ENCODE measurements at regions of chr5 and their contacts with region 1.

Region 1: GRCh38 chr5:95730730-95731570 is at the start of gene RHOBTB3:
- DNase-seq: peak; percentile 92
- ATAC-seq: peak; percentile 82 to 83
- total RNA-seq, gene RHOBTB3: 101 to 110 TPM

Region 2: DNA sequence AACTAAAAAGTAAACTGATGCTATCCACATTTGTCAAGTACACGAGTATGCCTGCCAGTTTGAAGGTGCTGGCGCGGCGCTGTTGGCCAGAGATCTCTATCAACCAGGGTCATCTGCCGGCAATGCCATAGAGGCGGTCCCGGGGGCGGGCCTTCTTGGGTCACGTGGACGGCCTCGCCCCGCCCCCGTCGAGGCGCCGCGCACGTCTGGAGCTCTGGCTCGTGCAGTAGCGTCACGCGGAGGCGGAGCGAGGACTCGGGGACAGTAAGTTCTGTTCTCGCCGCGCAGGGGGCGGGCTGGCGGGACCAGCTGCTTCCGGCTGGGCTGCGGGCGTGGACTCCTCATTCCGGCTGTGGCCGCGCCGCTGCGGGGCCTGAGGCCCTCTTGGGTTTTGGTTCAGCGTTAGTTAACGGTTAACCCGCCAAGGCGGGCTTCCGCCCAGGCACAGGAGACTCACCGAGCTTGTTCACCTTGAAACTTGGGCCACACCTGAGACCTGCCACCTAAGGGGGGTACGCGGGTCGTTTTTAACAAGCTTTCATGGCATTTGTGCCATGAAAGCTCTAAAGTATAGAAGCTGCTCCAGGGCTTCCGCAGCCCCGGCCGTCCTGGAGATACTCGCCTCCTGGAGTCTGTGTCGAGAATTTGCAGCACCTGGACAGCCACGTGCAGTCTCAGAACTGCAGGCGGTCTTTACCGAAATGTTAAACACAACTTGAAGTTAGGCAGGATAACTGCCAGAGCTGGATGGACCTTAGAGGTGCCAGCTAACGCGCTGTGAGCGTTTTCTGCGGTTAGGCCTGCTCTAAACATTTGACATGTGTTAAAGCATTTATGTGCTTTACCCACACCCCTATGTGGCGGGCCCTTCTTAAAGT is 84.2 kb before region 1 on chr5 and contains the start of gene RFESD:
- intact Hi-C with region 1: loop called (anchors 5 kb)
- DNase-seq: peak; percentile 100
- ATAC-seq: peak; percentile 99
- total RNA-seq, gene RFESD: 2.5 to 4.3 TPM